ENCODE measurements at regions of chr10 and their contacts with region 1.

Region 1: GRCh38 chr10:123573236-123574108 is 92.7 kb upstream of the GPR26 start:
- DNase-seq: peak; percentile 45

Region 2: GRCh38 chr10:123392182-123392963 is 181.1 kb before region 1 on chr10:
- in situ Hi-C with region 1: no loop called
- DNase-seq: no peak

Region 3: GRCh38 chr10:123967396-123968243 is 394.1 kb after region 1 on chr10:
- in situ Hi-C with region 1: loop called (anchors 10 kb)
- DNase-seq: peak; percentile 54